ENCODE measurements at regions of chr18 and their contacts with region 1.

Region 1: DNA sequence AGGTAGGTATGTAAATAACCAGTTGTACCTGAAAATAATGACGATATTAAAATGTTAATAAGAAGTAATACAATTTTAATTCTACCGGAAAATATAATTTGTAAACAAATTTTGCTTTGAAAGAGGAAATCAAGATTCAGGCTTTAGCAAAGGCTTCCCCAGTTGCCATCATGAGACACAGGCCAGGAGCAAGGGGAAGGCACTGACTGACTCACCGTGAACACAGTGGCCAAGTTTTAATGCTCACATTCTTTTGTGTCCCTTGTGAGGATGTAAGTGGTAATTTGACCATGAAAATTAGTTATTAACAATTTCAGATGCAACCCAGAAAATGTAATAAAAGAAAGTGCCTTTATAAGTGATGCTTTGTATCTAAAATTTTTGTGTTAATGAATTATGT is 164.1 kb downstream of the GREB1L start:
- DNase-seq: no peak
- H3K4me3 ChIP-seq: no peak overlapping the region
- H3K27ac ChIP-seq: no peak overlapping the region
- H3K4me1 ChIP-seq: no peaks in the 10 kb centered on the region
- H3K27me3 ChIP-seq: no peaks in the 10 kb centered on the region
- CTCF ChIP-seq: no peak
- EP300 ChIP-seq: no peak
- POLR2A ChIP-seq: no peak

Region 2: GRCh38 chr18:21366896-21367295 is 39.2 kb before region 1 on chr18:
- in situ Hi-C with region 1: no loop called
- intact Hi-C with region 1: loop called (anchors 1 kb)
- DNase-seq: no peak
- H3K4me3 ChIP-seq: no peak overlapping the region
- H3K27ac ChIP-seq: no peak overlapping the region
- H3K4me1 ChIP-seq: no peaks in the 10 kb centered on the region
- H3K27me3 ChIP-seq: peaks cover 6% of the 10 kb centered on the region
- CTCF ChIP-seq: no peak
- EP300 ChIP-seq: no peak
- POLR2A ChIP-seq: no peak

Measured in transverse colon (tissue), 4 donors.